Posterior cingulate gyrus (tissue), 11 donors: ENCODE measurements at regions of chr14 and their contacts with region 1.

Region 1: DNA sequence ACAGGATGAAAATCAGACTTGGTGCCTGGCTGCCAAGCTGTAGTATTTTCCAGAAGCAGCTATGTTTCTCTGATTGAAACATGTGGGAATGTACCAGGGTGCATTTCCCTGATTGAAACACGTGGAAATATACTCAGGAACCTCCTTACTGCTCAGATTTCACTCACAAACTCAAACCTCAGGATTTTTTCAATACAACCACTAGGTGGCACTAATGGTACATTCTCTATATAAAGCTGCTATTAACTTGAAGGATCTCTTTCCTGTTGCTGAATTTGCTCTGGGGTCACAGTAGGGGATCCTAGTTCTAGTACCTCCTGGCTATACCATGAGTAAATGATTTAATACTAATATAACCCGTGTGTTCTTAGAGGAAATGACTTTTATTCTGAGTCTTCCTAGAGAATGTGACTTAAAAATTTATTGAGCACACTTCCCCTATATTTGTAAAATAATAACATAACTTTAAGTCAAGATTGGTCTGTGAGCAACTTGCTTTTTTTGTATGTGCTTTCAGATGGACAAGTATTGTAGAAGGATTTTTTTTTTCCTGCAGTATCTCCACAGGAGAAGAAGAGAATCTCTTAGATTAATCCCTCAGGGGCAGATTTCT is 173.8 kb upstream of the MIS18BP1 start:
- DNase-seq: no peak

Region 2: GRCh38 chr14:44961604-44962333 is 465.0 kb before region 1 on chr14 and contains the starts of genes KLHL28 and TOGARAM1:
- intact Hi-C with region 1: no loop called
- DNase-seq: peak; percentile 97 to 100 (median 98)

Region 3: GRCh38 chr14:45070215-45070614 is 356.6 kb before region 1 on chr14:
- intact Hi-C with region 1: no loop called
- DNase-seq: no peak

Region 4: GRCh38 chr14:45526715-45527549 is 100.2 kb after region 1 on chr14:
- intact Hi-C with region 1: loop called (anchors 5 kb)
- DNase-seq: peak in 2 of 10 donors; percentile 62 to 75